GM12878 (cell line): ENCODE measurements at regions of chr20 and their contacts with region 1.

Region 1: DNA sequence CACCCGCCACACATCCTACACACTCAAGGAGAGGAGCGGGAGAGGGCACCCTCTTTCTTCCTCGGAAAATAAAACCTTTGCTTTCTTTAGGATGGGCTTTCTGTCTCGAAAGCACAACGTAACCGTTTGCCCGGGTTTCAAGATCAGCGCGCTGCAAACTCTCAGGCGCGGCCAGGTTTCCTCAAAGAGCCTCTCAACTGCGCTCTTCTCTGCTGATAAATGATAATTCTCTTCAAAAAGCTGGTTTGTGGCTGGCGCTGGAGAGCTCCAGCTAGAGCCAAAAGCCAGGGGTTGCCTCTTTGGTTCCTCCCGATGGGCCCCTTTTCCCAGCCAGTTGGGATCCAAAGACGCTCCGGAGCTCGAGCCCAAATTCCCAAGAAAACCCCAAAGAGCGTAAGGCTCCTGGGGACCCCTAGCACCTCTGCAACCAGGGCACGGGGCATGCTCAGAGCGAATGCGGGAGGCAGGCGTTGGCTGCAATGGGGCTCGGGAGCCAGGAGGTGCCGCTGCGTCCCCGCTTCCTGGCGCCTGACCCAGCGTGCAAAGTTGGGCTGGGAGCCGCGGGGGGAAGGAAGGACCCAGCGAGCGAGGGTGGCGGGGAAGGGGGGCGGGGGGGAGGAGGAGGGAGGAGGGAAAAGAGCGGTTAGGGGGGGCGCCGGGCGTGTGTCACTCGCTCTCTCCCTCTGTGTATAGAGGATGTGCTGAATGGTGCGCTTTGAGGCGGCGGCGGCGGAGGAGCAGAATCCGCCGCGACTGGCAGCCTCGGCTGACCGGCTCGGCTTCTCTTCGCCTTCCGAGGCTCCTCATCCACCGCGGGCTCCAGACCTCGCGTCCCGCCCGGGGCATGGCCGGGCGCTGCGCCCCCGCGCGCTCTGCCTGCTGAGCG is at the start of gene PLCB1:
- DNase-seq: no peak
- ATAC-seq: peak; percentile 95
- H3K4me3 ChIP-seq: peak within 1 kb of the TSS; percentile 41; the same call in 1 of the 2 replicates
- H3K27ac ChIP-seq: no peak within 1 kb of the TSS
- H3K4me1 ChIP-seq: peaks cover 10% of the 10 kb centered on the region; the same call in 1 of the 2 replicates
- H3K27me3 ChIP-seq: peaks cover 5 to 10% of the 10 kb centered on the region in 2 experiments
- CTCF ChIP-seq: peak; percentile 79 to 95 (median 93); a peak in 5 of 6 replicates
- EP300 ChIP-seq: no peak
- POLR2A ChIP-seq: no peak
- RAD21 ChIP-seq: peak; percentile 89
- polyA plus RNA-seq, gene PLCB1: 0.05 TPM in 1 of 2 experiments, not detected in the other

Region 2: DNA sequence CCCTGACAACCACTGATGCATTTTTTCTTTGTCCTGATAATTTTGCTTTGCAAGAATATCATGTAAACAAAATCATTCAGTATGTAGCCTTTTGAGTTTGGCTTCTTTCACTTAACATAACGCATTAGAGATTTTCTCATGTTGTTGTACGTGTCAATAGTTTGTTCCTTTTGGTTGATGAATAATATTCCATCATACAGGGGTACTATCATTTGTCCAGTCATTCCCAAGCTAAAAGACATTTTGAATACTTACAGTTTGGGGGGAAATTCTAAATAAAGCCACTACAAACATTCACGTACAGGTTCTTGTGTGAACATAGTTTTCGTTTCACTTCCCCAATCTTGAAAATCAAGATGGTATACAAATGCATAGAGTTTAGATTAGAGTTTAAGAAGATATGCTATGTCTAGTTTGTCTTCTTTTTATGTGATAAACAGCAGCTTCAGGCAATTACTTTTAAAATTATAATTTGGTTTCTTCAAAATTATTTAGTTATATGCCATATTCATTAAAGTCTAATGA is 196.8 kb before region 1 on chr20:
- CTCF ChIA-PET with region 1: interaction called, 10 read pairs
- POLR2A ChIA-PET with region 1: no interaction called
- RAD21 ChIA-PET with region 1: interaction called, 6 read pairs
- SMC1A ChIA-PET with region 1: interaction called, 7 read pairs
- in situ Hi-C with region 1: no loop called
- intact Hi-C with region 1: no loop called
- DNase-seq: peak; percentile 3
- ATAC-seq: peak; percentile 85
- H3K4me3 ChIP-seq: no peak overlapping the region
- H3K27ac ChIP-seq: no peak overlapping the region
- H3K4me1 ChIP-seq: no peaks in the 10 kb centered on the region; the same call in 1 of the 2 replicates
- H3K27me3 ChIP-seq: no peaks in the 10 kb centered on the region
- CTCF ChIP-seq: no peak
- EP300 ChIP-seq: 0 out of 4 replicates have a peak, but pooled peaks have one; percentile 13 to 37
- POLR2A ChIP-seq: no peak
- RAD21 ChIP-seq: no peak

Region 3: GRCh38 chr20:8073116-8073832 is 58.6 kb before region 1 on chr20:
- CTCF ChIA-PET with region 1: no interaction called
- POLR2A ChIA-PET with region 1: no interaction called
- RAD21 ChIA-PET with region 1: no interaction called
- SMC1A ChIA-PET with region 1: no interaction called
- in situ Hi-C with region 1: no loop called
- intact Hi-C with region 1: loop called (anchors 10 kb)
- DNase-seq: no peak
- ATAC-seq: no peak
- H3K4me3 ChIP-seq: no peak overlapping the region
- H3K27ac ChIP-seq: no peak overlapping the region
- H3K4me1 ChIP-seq: no peaks in the 10 kb centered on the region
- H3K27me3 ChIP-seq: no peaks in the 10 kb centered on the region
- CTCF ChIP-seq: no peak
- EP300 ChIP-seq: no peak
- POLR2A ChIP-seq: no peak
- RAD21 ChIP-seq: no peak

Region 4: GRCh38 chr20:8291873-8292272 is 160.0 kb after region 1 on chr20:
- CTCF ChIA-PET with region 1: no interaction called
- POLR2A ChIA-PET with region 1: no interaction called
- RAD21 ChIA-PET with region 1: no interaction called
- SMC1A ChIA-PET with region 1: no interaction called
- in situ Hi-C with region 1: no loop called
- intact Hi-C with region 1: loop called (anchors 5 kb)
- DNase-seq: no peak
- ATAC-seq: no peak
- H3K4me3 ChIP-seq: no peak overlapping the region
- H3K27ac ChIP-seq: no peak overlapping the region
- H3K4me1 ChIP-seq: no peaks in the 10 kb centered on the region
- H3K27me3 ChIP-seq: no peaks in the 10 kb centered on the region
- CTCF ChIP-seq: no peak
- EP300 ChIP-seq: no peak
- POLR2A ChIP-seq: no peak
- RAD21 ChIP-seq: no peak

Region 5: DNA sequence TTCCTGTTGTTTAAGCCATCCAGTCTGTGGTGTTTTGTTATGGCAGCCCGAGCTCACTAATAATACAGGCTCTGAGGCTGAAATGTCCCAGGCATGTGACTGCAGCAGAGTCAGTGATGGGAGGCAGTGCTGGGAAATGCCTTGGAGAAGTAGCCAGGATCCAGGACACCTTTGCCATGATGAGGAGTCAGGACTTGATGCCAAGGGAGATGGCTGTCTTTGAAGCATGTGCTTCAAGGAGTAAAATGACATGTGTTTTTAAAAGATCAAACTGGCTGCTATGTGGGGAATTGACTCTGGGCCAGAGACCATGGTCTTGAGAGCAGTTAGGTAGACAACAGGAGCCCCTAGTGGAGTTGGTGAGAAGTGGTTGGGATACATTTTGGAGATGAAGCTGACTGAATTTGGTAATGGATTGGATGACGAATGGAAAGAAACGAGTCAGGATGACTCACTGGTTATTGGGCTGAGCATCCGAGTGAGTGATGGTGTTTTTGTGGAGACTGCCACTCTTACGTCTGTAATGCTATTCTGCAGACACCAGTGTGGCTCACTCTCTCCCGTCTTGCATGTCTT is 322.4 kb after region 1 on chr20:
- CTCF ChIA-PET with region 1: interaction called, 3 read pairs
- POLR2A ChIA-PET with region 1: no interaction called
- RAD21 ChIA-PET with region 1: interaction called, 3 read pairs
- SMC1A ChIA-PET with region 1: interaction called, 5 read pairs
- in situ Hi-C with region 1: no loop called
- intact Hi-C with region 1: loop called (anchors 2 kb)
- DNase-seq: peak; percentile 17
- ATAC-seq: peak; percentile 87
- H3K4me3 ChIP-seq: no peak overlapping the region
- H3K27ac ChIP-seq: no peak overlapping the region
- H3K4me1 ChIP-seq: no peaks in the 10 kb centered on the region
- H3K27me3 ChIP-seq: no peaks in the 10 kb centered on the region
- CTCF ChIP-seq: peak; percentile 52 to 57 (median 52)
- EP300 ChIP-seq: no peak
- POLR2A ChIP-seq: no peak
- RAD21 ChIP-seq: peak; percentile 74